Calu3 (cell line): ENCODE measurements at regions of chrX and their contacts with region 1.

Region 1: GRCh38 chrX:10615931-10616775 is 4.2 kb downstream of the MID1 start:
- DNase-seq: peak; percentile 56
- H3K4me3 Mint-ChIP-seq: peak overlapping the region; percentile 89
- H3K27ac Mint-ChIP-seq: peak overlapping the region; percentile 85
- H3K4me1 Mint-ChIP-seq: peaks cover 44% of the 10 kb centered on the region
- H3K27me3 Mint-ChIP-seq: no peaks in the 10 kb centered on the region
- CTCF ChIP-seq: peak; percentile 30

Region 2: GRCh38 chrX:10077425-10078188 is 538.5 kb before region 1 on chrX:
- CTCF ChIA-PET with region 1: no interaction called
- intact Hi-C with region 1: no loop called
- DNase-seq: no peak
- H3K4me3 Mint-ChIP-seq: no peak overlapping the region
- H3K27ac Mint-ChIP-seq: no peak overlapping the region
- H3K4me1 Mint-ChIP-seq: no peaks in the 10 kb centered on the region
- H3K27me3 Mint-ChIP-seq: no peaks in the 10 kb centered on the region
- CTCF ChIP-seq: no peak

Region 3: DNA sequence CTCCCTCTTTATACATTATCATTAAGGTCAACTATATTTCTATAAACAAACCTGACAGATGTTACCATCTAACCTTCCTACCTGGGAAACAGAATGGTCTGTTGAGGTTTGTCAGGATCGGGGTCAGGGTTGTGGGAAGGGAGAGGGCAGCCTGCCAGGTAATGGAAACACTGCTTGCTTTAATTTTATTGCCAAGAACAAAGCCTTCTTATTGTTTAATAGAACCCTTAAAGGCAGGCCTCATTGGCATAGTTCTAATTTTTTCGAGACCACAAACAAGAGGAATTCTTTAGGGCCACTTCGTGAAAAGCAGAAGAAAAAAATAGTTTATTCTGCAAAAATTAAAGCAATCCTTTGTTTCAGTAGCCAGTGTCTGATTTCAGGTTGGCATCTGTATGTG is 109.0 kb before region 1 on chrX:
- CTCF ChIA-PET with region 1: no interaction called
- intact Hi-C with region 1: loop called (anchors 5 kb)
- DNase-seq: peak; percentile 68
- H3K4me3 Mint-ChIP-seq: no peak overlapping the region
- H3K27ac Mint-ChIP-seq: no peak overlapping the region
- H3K4me1 Mint-ChIP-seq: peaks cover 32% of the 10 kb centered on the region
- H3K27me3 Mint-ChIP-seq: no peaks in the 10 kb centered on the region
- CTCF ChIP-seq: no peak

Region 4: DNA sequence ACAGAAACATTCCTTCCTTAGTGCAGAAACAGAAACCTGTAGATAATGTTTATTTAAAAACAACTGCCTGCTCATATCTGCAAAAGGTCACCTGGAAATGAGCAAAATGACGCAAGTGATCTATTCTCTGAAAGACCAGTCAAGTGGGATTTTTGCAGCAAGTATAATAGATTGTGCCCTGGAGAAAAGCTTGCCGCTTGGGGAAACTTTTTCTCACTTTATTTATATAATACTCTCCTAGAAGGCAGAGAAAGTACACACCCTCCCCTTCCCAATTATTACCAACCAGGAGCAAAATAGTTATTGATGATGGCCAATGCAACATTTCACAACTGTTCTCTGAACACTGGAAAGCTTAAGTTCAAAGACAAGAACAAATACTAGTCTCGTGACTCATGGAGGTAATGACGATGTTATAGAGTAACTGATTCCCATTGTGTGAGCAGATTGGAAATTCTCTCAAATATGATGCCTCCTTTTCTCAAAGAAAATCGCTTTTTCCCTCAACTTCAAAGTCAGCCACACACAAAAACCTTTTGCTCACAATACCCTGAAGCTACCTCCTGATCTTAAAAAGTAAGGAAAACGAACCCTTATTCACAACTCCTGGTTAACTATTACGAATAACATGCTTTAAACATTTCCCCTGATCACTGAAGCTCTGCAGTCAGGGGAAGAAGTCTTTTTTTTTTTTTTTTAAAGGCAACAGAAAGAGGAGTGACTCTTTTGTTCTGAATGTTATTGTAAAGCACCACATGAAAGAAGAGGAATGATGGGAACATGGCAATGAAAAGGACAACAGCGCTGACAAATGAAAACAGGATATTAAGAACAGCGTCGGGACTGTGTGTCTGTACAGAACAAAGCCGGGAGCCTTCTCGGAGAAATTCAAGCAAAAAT is 36.8 kb before region 1 on chrX:
- CTCF ChIA-PET with region 1: no interaction called
- intact Hi-C with region 1: loop called (anchors 5 kb)
- DNase-seq: peak; percentile 39
- H3K4me3 Mint-ChIP-seq: peak overlapping the region; percentile 64
- H3K27ac Mint-ChIP-seq: peak overlapping the region; percentile 99
- H3K4me1 Mint-ChIP-seq: peaks cover 60% of the 10 kb centered on the region
- H3K27me3 Mint-ChIP-seq: no peaks in the 10 kb centered on the region
- CTCF ChIP-seq: no peak

Region 5: DNA sequence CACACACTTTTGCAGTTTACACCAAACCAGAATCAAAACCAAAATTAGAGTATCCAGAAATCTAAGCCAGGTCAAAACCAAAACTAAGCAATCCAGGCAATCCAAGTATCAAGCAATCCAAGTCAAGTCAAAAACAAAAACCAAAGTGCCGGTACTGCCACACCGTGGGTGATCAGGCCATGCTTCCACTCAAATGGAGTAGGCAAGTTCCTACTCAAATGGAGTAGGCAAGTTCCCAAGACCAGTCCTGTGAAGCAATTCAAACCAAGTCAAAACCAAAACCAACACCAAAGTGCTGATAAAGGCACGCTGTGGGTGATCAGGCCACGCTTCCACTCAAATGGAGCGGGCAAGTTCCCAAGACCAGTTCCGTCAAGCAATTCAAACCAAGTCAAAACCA is 27.1 kb before region 1 on chrX:
- CTCF ChIA-PET with region 1: interaction called, 15 read pairs
- intact Hi-C with region 1: no loop called
- DNase-seq: no peak
- H3K4me3 Mint-ChIP-seq: peak overlapping the region; percentile 83
- H3K27ac Mint-ChIP-seq: peak overlapping the region; percentile 93
- H3K4me1 Mint-ChIP-seq: peaks cover 34% of the 10 kb centered on the region
- H3K27me3 Mint-ChIP-seq: no peaks in the 10 kb centered on the region
- CTCF ChIP-seq: no peak

Region 6: GRCh38 chrX:10636337-10636736 is 20.2 kb after region 1 on chrX:
- CTCF ChIA-PET with region 1: no interaction called
- intact Hi-C with region 1: loop called (anchors 2 kb)
- DNase-seq: peak; percentile 56
- H3K4me3 Mint-ChIP-seq: peak overlapping the region; percentile 28
- H3K27ac Mint-ChIP-seq: peak overlapping the region; percentile 75
- H3K4me1 Mint-ChIP-seq: peaks cover 22% of the 10 kb centered on the region
- H3K27me3 Mint-ChIP-seq: no peaks in the 10 kb centered on the region
- CTCF ChIP-seq: peak; percentile 28

Region 7: GRCh38 chrX:10685923-10686590 is 69.9 kb after region 1 on chrX:
- CTCF ChIA-PET with region 1: no interaction called
- intact Hi-C with region 1: no loop called
- DNase-seq: no peak
- H3K4me3 Mint-ChIP-seq: no peak overlapping the region
- H3K27ac Mint-ChIP-seq: no peak overlapping the region
- H3K4me1 Mint-ChIP-seq: peaks cover 17% of the 10 kb centered on the region
- H3K27me3 Mint-ChIP-seq: no peaks in the 10 kb centered on the region
- CTCF ChIP-seq: no peak

Region 8: DNA sequence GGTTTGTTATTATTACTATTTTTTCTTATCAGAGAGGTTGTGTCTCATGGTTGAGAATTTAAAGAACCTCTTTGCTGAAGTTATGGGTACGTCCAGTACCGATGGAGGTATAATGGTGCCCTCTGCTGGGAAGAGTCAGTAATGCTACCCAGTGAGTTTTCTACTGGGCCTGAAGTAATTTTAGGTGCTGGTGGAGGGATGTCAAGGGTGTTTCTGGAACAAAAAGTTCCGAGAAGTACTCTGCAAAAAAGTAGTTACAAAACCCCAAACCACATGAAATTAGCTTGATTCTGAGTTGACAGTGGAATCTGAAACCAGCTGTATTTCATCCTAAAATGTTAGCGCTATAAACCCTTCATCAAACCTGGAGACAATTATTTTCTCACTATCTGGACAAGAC is 106.7 kb after region 1 on chrX:
- CTCF ChIA-PET with region 1: interaction called, 3 read pairs
- intact Hi-C with region 1: loop called (anchors 5 kb)
- DNase-seq: peak; percentile 66
- H3K4me3 Mint-ChIP-seq: no peak overlapping the region
- H3K27ac Mint-ChIP-seq: no peak overlapping the region
- H3K4me1 Mint-ChIP-seq: peaks cover 6% of the 10 kb centered on the region
- H3K27me3 Mint-ChIP-seq: no peaks in the 10 kb centered on the region
- CTCF ChIP-seq: no peak